ENCODE measurements at regions of chr4 and their contacts with region 1.

Region 1: DNA sequence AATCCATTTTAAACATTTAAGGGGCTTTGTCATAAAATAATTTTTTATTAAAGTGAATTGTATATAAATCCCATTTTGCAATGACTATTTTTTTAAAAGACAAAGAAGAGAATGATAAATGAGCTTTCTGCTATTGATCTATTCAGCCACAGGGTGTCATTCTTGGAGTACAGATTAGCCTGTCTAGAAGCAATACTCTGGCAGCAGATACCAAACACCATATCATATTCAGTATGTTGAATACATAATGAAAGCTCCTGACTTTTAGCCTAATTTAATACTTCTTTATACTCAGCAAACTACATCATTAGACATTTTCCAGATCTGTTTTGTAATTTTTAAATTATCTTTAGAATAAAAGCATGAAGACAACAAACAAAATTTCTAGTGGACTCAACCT is 496.3 kb downstream of the PDGFC start:
- DNase-seq: peak; percentile 76
- ATAC-seq: peak; percentile 32; the same call in 1 of the 2 replicates
- H3K4me3 ChIP-seq: no peak overlapping the region
- H3K27ac ChIP-seq: no peak overlapping the region
- H3K4me1 ChIP-seq: peaks cover 5% of the 10 kb centered on the region
- H3K27me3 ChIP-seq: no peaks in the 10 kb centered on the region
- CTCF ChIP-seq: peak; percentile 70
- POLR2A ChIP-seq: no peak
- RAD21 ChIP-seq: peak; percentile 90

Region 2: GRCh38 chr4:155403886-155404285 is 1071.4 kb before region 1 on chr4:
- CTCF ChIA-PET with region 1: no interaction called
- POLR2A ChIA-PET with region 1: no interaction called
- dilution Hi-C with region 1: no loop called
- in situ Hi-C with region 1: no loop called
- intact Hi-C with region 1: loop called (anchors 10 kb)
- DNase-seq: peak; percentile 72
- ATAC-seq: peak; percentile 84
- H3K4me3 ChIP-seq: no peak overlapping the region
- H3K27ac ChIP-seq: no peak overlapping the region
- H3K4me1 ChIP-seq: no peaks in the 10 kb centered on the region; the same call in 1 of the 2 replicates
- H3K27me3 ChIP-seq: no peaks in the 10 kb centered on the region
- CTCF ChIP-seq: peak; percentile 72
- POLR2A ChIP-seq: no peak
- RAD21 ChIP-seq: peak; percentile 80

Region 3: GRCh38 chr4:156294577-156294976 is 180.7 kb before region 1 on chr4:
- CTCF ChIA-PET with region 1: interaction called, 12 read pairs
- POLR2A ChIA-PET with region 1: no interaction called
- dilution Hi-C with region 1: no loop called
- in situ Hi-C with region 1: no loop called
- intact Hi-C with region 1: loop called (anchors 5 kb)
- DNase-seq: peak; percentile 87
- ATAC-seq: peak; percentile 70
- H3K4me3 ChIP-seq: no peak overlapping the region
- H3K27ac ChIP-seq: no peak overlapping the region
- H3K4me1 ChIP-seq: peaks cover 4% of the 10 kb centered on the region; the same call in 1 of the 2 replicates
- H3K27me3 ChIP-seq: no peaks in the 10 kb centered on the region
- CTCF ChIP-seq: peak; percentile 63
- POLR2A ChIP-seq: no peak
- RAD21 ChIP-seq: peak; percentile 63

Region 4: DNA sequence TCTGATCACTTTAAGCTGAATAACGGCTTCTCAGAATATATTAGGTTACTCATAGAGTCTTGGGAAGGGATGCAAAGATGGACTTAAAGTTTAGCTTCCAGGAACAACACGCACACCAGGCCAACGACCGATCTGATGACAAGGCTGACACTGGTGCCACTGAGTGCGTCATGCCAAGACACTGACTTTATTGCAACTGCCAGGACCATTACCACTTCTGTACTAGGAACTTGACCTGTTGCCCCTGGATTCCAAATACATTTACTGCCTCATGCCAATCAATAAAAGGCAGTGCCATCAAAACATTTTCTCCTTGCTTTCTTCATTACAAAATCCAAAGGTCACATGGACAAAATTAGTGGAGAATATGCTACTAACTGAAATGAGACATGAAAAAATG is 15.7 kb before region 1 on chr4:
- CTCF ChIA-PET with region 1: no interaction called
- POLR2A ChIA-PET with region 1: no interaction called
- dilution Hi-C with region 1: no loop called
- in situ Hi-C with region 1: no loop called
- intact Hi-C with region 1: no loop called
- DNase-seq: no peak
- ATAC-seq: no peak
- H3K4me3 ChIP-seq: no peak overlapping the region
- H3K27ac ChIP-seq: no peak overlapping the region
- H3K4me1 ChIP-seq: no peaks in the 10 kb centered on the region
- H3K27me3 ChIP-seq: no peaks in the 10 kb centered on the region
- CTCF ChIP-seq: no peak
- POLR2A ChIP-seq: no peak
- RAD21 ChIP-seq: no peak

Region 5: GRCh38 chr4:156528216-156528615 is 52.9 kb after region 1 on chr4:
- CTCF ChIA-PET with region 1: no interaction called
- POLR2A ChIA-PET with region 1: no interaction called
- dilution Hi-C with region 1: no loop called
- in situ Hi-C with region 1: no loop called
- intact Hi-C with region 1: no loop called
- DNase-seq: peak; percentile 24
- ATAC-seq: peak; percentile 44; the same call in 1 of the 2 replicates
- H3K4me3 ChIP-seq: no peak overlapping the region
- H3K27ac ChIP-seq: no peak overlapping the region
- H3K4me1 ChIP-seq: no peaks in the 10 kb centered on the region
- H3K27me3 ChIP-seq: no peaks in the 10 kb centered on the region
- CTCF ChIP-seq: no peak
- POLR2A ChIP-seq: no peak
- RAD21 ChIP-seq: no peak

Region 6: GRCh38 chr4:156686120-156686519 is 210.8 kb after region 1 on chr4:
- CTCF ChIA-PET with region 1: no interaction called
- POLR2A ChIA-PET with region 1: no interaction called
- dilution Hi-C with region 1: no loop called
- in situ Hi-C with region 1: no loop called
- intact Hi-C with region 1: loop called (anchors 5 kb)
- DNase-seq: peak; percentile 93
- ATAC-seq: peak; percentile 86
- H3K4me3 ChIP-seq: no peak overlapping the region
- H3K27ac ChIP-seq: no peak overlapping the region
- H3K4me1 ChIP-seq: no peaks in the 10 kb centered on the region; the same call in 1 of the 2 replicates
- H3K27me3 ChIP-seq: no peaks in the 10 kb centered on the region
- CTCF ChIP-seq: no peak
- POLR2A ChIP-seq: no peak
- RAD21 ChIP-seq: no peak

Region 7: DNA sequence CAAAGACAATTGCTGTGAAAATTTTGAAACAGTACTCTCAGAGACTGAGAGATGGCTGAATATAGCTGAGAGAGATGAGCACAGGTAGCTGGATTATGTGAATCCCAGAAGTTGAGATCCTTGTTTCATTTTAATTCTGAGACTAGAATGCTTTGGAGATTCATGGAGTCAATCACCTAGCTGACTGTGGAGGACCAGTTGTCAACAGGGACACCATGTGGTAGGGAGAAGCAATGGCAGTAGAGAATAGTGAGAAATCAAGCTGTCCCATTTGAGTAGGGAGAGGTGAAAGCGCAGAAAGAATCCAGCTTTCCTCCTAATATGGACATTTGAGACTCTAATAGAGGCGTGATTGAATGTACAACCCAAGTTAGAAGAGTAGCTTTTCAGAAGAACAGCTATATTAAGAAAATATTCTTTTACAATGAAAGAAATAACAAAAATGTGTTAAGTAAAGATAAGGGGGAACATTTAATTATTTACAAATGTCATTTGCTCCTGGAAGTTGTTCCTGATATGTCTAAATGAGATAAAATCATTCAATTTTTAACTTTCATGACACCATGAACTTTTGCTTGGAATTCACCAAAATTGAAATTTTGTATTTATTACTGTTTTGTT is 570.3 kb after region 1 on chr4:
- CTCF ChIA-PET with region 1: interaction called, 14 read pairs
- POLR2A ChIA-PET with region 1: no interaction called
- dilution Hi-C with region 1: no loop called
- in situ Hi-C with region 1: loop called (anchors 10 kb)
- intact Hi-C with region 1: loop called (anchors 1 kb)
- DNase-seq: peak; percentile 80
- ATAC-seq: peak; percentile 96
- H3K4me3 ChIP-seq: no peak overlapping the region
- H3K27ac ChIP-seq: no peak overlapping the region
- H3K4me1 ChIP-seq: 0 out of 2 replicates have a peak, but pooled peaks cover 3% of the 10 kb centered on the region
- H3K27me3 ChIP-seq: no peaks in the 10 kb centered on the region
- CTCF ChIP-seq: peak; percentile 90
- POLR2A ChIP-seq: no peak
- RAD21 ChIP-seq: peak; percentile 94

Region 8: DNA sequence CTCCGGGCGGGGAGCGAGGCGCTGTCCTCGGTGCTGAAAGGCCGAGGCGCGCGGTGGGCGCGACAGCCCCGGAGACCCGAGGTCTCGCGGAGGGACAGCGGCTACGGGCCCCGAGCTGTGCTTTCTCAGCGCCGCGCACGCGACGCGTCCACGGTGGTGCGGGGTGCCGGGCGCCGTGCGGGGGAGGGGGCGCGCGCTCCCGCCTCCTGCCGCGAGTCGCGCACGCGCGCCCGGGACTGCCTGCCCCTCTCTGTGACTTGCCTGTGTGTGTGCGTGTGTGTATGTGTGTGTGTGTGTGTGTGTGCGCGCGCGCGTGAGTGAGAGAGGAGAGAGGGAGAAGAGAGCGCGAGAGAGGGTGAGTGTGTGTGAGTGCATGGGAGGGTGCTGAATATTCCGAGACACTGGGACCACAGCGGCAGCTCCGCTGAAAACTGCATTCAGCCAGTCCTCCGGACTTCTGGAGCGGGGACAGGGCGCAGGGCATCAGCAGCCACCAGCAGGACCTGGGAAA is 745.1 kb after region 1 on chr4 and contains the start of gene GRIA2:
- CTCF ChIA-PET with region 1: no interaction called
- POLR2A ChIA-PET with region 1: no interaction called
- dilution Hi-C with region 1: no loop called
- in situ Hi-C with region 1: no loop called
- intact Hi-C with region 1: loop called (anchors 5 kb)
- DNase-seq: peak; percentile 54
- ATAC-seq: peak; percentile 94
- H3K4me3 ChIP-seq: peak within 1 kb of the TSS; percentile 37
- H3K27ac ChIP-seq: no peak within 1 kb of the TSS
- H3K4me1 ChIP-seq: peaks cover 4% of the 10 kb centered on the region; the same call in 1 of the 2 replicates
- H3K27me3 ChIP-seq: peaks cover 33% of the 10 kb centered on the region
- CTCF ChIP-seq: no peak
- POLR2A ChIP-seq: no peak
- RAD21 ChIP-seq: no peak
- total RNA-seq, gene GRIA2: not detected in 2 replicates